ENCODE measurements at regions of chr18 and their contacts with region 1.

Region 1: GRCh38 chr18:35605686-35606417 is 24.3 kb downstream of the GALNT1 start:
- DNase-seq: peak; percentile 85
- H3K4me3 ChIP-seq: no peak overlapping the region
- H3K27ac ChIP-seq: peak overlapping the region; percentile 34
- H3K4me1 ChIP-seq: peaks cover 29% of the 10 kb centered on the region
- H3K27me3 ChIP-seq: no peaks in the 10 kb centered on the region
- CTCF ChIP-seq: no peak
- POLR2A ChIP-seq: peak; percentile 44

Region 2: DNA sequence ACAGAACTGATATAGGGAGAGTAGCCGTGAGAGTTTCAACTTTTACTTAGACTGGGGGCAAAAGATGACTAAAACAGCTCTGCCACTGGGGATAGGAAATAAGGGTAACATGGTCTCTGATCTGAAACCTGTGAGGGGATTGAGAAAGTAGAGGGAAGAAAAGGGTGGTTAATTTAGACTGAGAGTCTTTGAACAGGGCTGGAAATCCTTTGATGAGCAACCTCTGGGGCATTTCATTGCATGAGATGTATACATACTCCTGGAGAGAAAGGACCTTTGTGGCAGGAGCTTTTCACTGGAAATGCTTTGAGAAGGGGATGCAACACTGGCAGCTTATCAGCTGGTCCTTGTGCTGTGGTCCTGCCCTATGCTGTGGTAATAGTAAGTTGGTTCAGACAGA is 14.9 kb before region 1 on chr18:
- CTCF ChIA-PET with region 1: no interaction called
- POLR2A ChIA-PET with region 1: no interaction called
- dilution Hi-C with region 1: no loop called
- intact Hi-C with region 1: loop called (anchors 2 kb)
- DNase-seq: no peak
- H3K4me3 ChIP-seq: no peak overlapping the region
- H3K27ac ChIP-seq: no peak overlapping the region
- H3K4me1 ChIP-seq: no peaks in the 10 kb centered on the region
- H3K27me3 ChIP-seq: no peaks in the 10 kb centered on the region
- CTCF ChIP-seq: no peak
- POLR2A ChIP-seq: no peak

Region 3: DNA sequence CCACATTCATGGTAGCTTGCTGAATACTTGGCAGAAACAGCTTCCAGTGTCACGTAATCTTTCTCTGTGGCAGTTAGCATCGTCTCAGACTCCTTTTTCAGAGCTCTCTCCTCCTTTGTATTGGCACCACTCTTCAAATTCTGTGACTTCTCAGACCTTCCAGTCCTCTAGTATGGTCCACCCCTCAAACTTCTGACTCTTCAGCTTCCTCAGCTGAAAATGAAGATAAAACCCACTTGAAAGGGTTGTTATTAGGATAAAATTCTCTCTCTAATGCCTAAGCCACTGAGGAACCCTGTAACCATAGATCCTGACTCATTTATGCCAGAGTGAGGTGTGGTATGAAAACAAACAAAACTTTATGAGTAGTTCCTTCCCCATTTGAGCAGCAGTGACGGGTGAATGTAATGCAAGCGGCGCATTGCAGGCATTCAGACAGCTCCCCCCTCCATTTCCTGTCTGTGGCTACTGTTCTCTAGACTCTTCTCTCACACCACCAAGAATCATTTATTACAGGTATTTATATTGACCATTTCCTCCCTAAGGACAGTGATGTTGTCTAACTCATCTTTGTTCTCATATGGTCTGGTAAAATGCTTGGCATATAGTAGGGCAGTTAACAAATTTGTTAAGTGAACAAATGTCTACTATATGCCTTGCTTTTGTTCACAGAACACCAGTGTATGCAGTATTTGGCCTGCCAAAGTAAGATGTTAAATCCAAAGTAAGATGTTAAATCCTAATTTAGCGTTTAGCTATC is 11.0 kb after region 1 on chr18:
- CTCF ChIA-PET with region 1: interaction called, 8 read pairs
- POLR2A ChIA-PET with region 1: no interaction called
- dilution Hi-C with region 1: no loop called
- intact Hi-C with region 1: loop called (anchors 1 kb)
- DNase-seq: peak; percentile 95
- H3K4me3 ChIP-seq: peak overlapping the region in 1 of 3 experiments; percentile 54
- H3K27ac ChIP-seq: peak overlapping the region; percentile 98
- H3K4me1 ChIP-seq: peaks cover 83% of the 10 kb centered on the region
- H3K27me3 ChIP-seq: no peaks in the 10 kb centered on the region
- CTCF ChIP-seq: no peak
- POLR2A ChIP-seq: peak; percentile 52